Transverse colon (tissue), 4 donors: ENCODE measurements at regions of chr6 and their contacts with region 1.

Region 1: DNA sequence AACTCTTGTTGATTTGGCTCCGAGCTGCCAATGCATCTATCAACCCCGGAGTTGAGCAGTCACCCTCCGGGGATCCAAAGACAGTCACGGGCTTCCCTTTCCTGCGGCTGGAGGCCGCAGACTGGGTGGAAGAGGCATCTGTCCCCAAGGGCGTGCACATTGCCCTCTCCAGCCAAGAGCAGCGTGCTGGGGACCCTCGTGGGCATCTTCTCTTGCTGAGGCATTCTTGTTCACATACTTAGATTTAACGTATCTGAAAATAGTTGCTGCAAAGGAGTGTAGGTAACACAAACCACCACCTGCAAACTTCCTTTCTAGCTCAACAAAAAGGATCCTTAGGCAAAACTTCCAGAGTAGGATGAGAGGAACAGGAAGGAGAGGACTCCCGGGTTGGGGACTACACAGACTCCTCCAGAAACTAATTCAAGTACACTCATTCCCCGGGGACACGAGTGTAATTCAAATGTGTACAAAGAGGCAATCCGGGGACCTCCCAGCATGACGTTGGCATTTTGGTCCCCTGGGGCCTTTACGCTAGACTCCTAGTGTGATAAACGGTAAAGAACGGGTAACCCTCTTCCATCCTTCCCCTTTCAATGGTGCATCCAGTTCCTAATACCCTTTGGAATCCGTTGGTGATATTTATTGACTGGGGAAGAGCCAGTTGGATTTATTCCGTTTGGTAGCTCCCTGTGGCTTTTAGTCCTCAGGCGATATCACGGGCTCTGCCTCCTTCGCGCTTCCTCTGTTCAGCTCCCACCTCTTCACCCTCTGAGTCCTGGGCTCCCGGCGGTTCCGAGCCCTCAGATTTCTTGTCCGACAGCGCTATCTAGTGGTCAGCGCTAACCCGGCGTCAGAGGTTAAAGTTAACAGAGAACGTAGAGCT is 2.7 kb upstream of the COL12A1 start:
- DNase-seq: peak; percentile 88
- H3K4me3 ChIP-seq: peak overlapping the region in 2 of 4 donors; percentile 4 to 14
- H3K27ac ChIP-seq: peak overlapping the region; percentile 22 to 72 (median 58)
- H3K4me1 ChIP-seq: peaks cover 4 to 61% (median 23%) of the 10 kb centered on the region in 4 donors
- H3K27me3 ChIP-seq: peaks cover 50% of the 10 kb centered on the region
- CTCF ChIP-seq: peak; percentile 80 to 89 (median 85)
- EP300 ChIP-seq: no peak
- POLR2A ChIP-seq: no peak

Region 2: DNA sequence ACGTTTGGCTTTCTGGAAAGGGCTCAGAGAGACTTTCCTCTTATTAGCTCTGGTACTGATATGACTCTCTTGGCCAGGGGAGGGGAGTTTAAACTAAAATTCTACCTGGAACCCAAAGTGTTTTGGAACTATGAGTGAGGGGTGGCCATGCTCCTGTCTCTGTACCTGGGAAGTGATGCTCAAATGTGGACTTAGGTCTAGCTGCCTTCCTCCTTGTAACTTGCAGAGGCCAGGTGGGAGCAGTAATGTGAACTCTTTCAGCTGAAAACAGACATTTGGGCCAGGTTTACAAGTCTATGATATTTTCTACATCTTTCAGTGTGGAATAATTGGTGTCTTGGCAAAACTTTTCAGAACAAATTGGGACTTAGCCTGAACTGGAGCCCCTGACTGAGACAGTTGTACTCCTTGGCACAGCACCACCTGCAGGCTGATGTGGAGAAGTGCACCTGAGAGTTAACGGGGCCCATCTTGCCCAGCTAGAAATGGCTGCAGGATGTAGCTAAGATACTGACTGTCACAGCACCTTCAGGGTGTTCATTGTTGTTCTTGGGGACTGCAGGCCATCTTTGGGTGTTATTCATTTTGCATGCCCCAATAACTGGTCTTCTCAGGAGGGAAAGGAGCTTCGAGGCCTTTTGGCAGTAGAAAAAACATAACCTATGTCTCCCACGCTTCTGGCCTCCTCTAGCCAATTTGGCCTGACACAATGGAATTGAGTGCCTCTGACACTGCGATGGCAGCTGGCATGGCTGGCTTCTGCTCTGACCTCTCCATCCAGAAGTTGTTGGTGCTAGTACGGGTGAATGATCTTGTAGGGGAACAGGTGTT is 1475.5 kb before region 1 on chr6:
- in situ Hi-C with region 1: loop called in 2 of 4 experiments (anchors 25 kb)
- intact Hi-C with region 1: loop called (anchors 5 kb)
- DNase-seq: peak; percentile 62
- H3K4me3 ChIP-seq: no peak overlapping the region
- H3K27ac ChIP-seq: no peak overlapping the region
- H3K4me1 ChIP-seq: peaks cover 0 to 7% (median 0%) of the 10 kb centered on the region in 4 donors
- H3K27me3 ChIP-seq: no peaks in the 10 kb centered on the region
- CTCF ChIP-seq: peak; percentile 79 to 92 (median 88)
- EP300 ChIP-seq: no peak
- POLR2A ChIP-seq: no peak

Region 3: GRCh38 chr6:73747289-73747688 is 1461.3 kb before region 1 on chr6:
- in situ Hi-C with region 1: loop called (anchors 10 to 25 kb)
- intact Hi-C with region 1: no loop called
- DNase-seq: no peak
- H3K4me3 ChIP-seq: no peak overlapping the region
- H3K27ac ChIP-seq: no peak overlapping the region
- H3K4me1 ChIP-seq: peaks cover 0 to 6% (median 0%) of the 10 kb centered on the region in 4 donors
- H3K27me3 ChIP-seq: no peaks in the 10 kb centered on the region
- CTCF ChIP-seq: no peak
- EP300 ChIP-seq: no peak
- POLR2A ChIP-seq: no peak

Region 4: GRCh38 chr6:73969971-73970970 is 1238.3 kb before region 1 on chr6:
- in situ Hi-C with region 1: no loop called
- intact Hi-C with region 1: loop called (anchors 5 kb)
- DNase-seq: no peak
- H3K4me3 ChIP-seq: no peak overlapping the region
- H3K27ac ChIP-seq: no peak overlapping the region
- H3K4me1 ChIP-seq: peaks cover 0 to 5% (median 0%) of the 10 kb centered on the region in 4 donors
- H3K27me3 ChIP-seq: no peaks in the 10 kb centered on the region
- CTCF ChIP-seq: peak in 4 of 5 experiments; percentile 41 to 54 (median 46)
- EP300 ChIP-seq: no peak
- POLR2A ChIP-seq: no peak

Region 5: GRCh38 chr6:74409447-74409846 is 799.1 kb before region 1 on chr6:
- in situ Hi-C with region 1: loop called in 3 of 4 experiments (anchors 25 kb)
- intact Hi-C with region 1: loop called (anchors 5 kb)
- DNase-seq: no peak
- H3K4me3 ChIP-seq: no peak overlapping the region
- H3K27ac ChIP-seq: no peak overlapping the region
- H3K4me1 ChIP-seq: no peaks in the 10 kb centered on the region
- H3K27me3 ChIP-seq: no peaks in the 10 kb centered on the region
- CTCF ChIP-seq: peak; percentile 28 to 44 (median 40)
- EP300 ChIP-seq: no peak
- POLR2A ChIP-seq: no peak